ENCODE measurements at regions of chr6 and their contacts with region 1.

Region 1: GRCh38 chr6:110949679-110950285 is 8.7 kb upstream of the GTF3C6 start:
- DNase-seq: no peak
- H3K4me3 Mint-ChIP-seq: no peak overlapping the region
- H3K27ac Mint-ChIP-seq: no peak overlapping the region
- H3K4me1 Mint-ChIP-seq: peaks cover 2% of the 10 kb centered on the region
- H3K27me3 Mint-ChIP-seq: no peaks in the 10 kb centered on the region

Region 2: GRCh38 chr6:110618591-110619267 is 331.1 kb before region 1 on chr6:
- CTCF ChIA-PET with region 1: interaction called, 4 read pairs
- intact Hi-C with region 1: loop called (anchors 2 kb)
- DNase-seq: no peak
- H3K4me3 Mint-ChIP-seq: no peak overlapping the region
- H3K27ac Mint-ChIP-seq: no peak overlapping the region
- H3K4me1 Mint-ChIP-seq: no peaks in the 10 kb centered on the region
- H3K27me3 Mint-ChIP-seq: no peaks in the 10 kb centered on the region

Region 3: DNA sequence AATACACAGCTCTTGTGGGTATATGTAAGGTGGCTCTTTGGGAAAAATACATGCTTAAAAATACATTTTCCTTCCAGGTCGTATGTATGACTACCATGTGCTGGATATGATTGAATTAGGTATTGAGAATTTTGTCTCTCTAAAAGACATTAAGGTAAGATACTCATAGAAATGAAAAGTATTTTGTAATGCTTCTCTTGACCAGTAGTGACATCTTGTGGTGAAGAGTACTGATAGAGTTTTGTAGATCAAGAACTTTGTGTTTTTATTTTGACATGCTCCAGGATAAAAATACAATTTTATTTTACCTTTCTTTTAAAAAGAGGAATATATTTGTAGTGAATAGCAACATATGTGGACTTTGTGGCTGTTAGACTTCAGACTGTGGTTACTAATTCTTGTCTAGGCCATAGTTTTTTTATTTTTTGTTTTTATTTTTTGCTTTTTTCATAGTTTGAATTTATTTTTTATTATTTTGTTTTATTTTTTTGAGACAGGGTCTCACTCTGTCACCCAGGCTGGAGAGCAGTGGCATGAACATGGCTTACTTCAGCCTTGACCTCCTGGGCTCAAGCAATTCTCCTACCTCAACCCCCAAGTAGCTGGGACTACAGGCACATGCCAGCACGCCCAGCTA is 50.0 kb after region 1 on chr6:
- CTCF ChIA-PET with region 1: no interaction called
- intact Hi-C with region 1: no loop called
- DNase-seq: no peak
- H3K4me3 Mint-ChIP-seq: no peak overlapping the region
- H3K27ac Mint-ChIP-seq: no peak overlapping the region
- H3K4me1 Mint-ChIP-seq: peaks cover 2% of the 10 kb centered on the region
- H3K27me3 Mint-ChIP-seq: no peaks in the 10 kb centered on the region

Measured in activated naive CD4-positive, alpha-beta T cell treated with anti-CD3 and anti-CD28 coated beads for 36 hours (primary cell).